ENCODE measurements at regions of chr5 and their contacts with region 1.

Region 1: GRCh38 chr5:76393035-76393680 is 9.9 kb upstream of the IQGAP2 start:
- DNase-seq: no peak
- ATAC-seq: no peak
- H3K4me3 ChIP-seq: no peak overlapping the region
- H3K27ac ChIP-seq: no peak overlapping the region
- H3K4me1 ChIP-seq: no peaks in the 10 kb centered on the region; a peak in 1 of 5 replicates
- H3K27me3 ChIP-seq: no peaks in the 10 kb centered on the region
- CTCF ChIP-seq: no peak
- EP300 ChIP-seq: no peak
- POLR2A ChIP-seq: no peak
- RAD21 ChIP-seq: no peak

Region 2: DNA sequence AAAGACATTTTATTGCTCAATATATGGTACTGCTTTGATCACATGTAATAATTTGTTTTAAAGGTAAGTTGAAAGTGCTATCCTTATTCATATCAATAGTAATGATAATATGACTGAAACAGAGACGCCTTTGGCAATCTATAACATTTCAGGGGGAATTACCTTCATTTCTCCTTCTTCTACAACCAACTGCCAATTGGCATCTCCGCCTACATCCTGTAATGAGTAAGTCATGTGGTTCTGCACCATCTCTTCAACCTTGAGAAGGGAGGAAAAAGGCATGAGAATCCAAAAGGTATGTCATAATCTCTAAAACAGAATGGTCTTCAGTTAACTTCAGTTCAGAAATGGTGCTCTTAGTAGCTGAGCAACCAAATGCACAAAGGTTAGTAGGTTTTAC is 1003.7 kb before region 1 on chr5:
- CTCF ChIA-PET with region 1: no interaction called
- POLR2A ChIA-PET with region 1: no interaction called
- in situ Hi-C with region 1: loop called (anchors 10 kb)
- intact Hi-C with region 1: no loop called
- DNase-seq: no peak
- ATAC-seq: no peak
- H3K4me3 ChIP-seq: no peak overlapping the region
- H3K27ac ChIP-seq: no peak overlapping the region
- H3K4me1 ChIP-seq: no peaks in the 10 kb centered on the region
- H3K27me3 ChIP-seq: no peaks in the 10 kb centered on the region
- CTCF ChIP-seq: no peak
- EP300 ChIP-seq: no peak
- POLR2A ChIP-seq: no peak
- RAD21 ChIP-seq: no peak

Measured in K562 (cell line).